Breast epithelium (tissue), 4 donors: ENCODE measurements at regions of chr1 and their contacts with region 1.

Region 1: GRCh38 chr1:109532365-109533136 is 7.1 kb upstream of the GPR61 start:
- DNase-seq: peak; percentile 70 to 79
- H3K4me3 ChIP-seq: peak overlapping the region in 1 of 3 donors; percentile 32
- H3K27ac ChIP-seq: peak overlapping the region in 1 of 2 donors; percentile 43
- H3K4me1 ChIP-seq: no peaks in the 10 kb centered on the region
- H3K27me3 ChIP-seq: no peaks in the 10 kb centered on the region
- CTCF ChIP-seq: peak; percentile 93 to 96 (median 96)
- POLR2A ChIP-seq: no peak

Region 2: DNA sequence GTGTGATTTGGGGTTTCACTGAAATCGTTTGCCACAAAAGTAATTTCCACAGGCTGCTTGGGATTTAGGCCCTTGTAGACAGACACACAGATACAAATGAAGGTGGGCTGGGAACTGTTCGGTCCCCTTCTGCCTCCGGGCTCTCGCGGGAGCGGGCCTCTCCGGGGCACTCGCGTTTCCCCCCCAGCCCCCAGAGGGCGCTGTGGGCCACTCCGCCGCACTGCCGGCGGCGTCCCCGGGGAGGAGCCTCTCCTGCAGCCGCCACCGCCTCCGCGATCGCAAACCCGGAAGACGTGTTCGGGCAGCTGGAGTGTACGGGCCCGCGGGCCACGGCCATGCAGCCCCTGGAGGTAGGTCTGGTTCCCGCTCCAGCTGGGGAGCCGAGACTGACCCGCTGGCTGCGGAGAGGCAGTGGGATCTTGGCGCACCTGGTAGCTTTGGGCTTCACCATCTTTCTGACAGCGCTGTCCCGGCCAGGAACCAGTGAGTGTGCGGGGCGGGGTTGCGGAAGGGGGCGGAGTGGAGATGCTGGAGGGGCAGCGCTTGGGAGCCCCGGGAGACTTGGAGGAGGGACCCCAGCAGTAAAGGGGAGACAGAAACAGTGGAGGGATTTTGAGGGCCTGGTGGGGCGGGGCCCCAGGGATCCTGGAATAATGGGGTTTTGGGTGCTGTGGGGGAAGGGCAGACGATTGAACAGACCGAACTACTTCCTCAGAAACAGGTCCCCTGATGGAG is 38.6 kb before region 1 on chr1 and contains the start of gene CYB561D1:
- intact Hi-C with region 1: loop called (anchors 5 kb)
- DNase-seq: peak; percentile 77 to 85
- H3K4me3 ChIP-seq: peak within 1 kb of the TSS; percentile 85 to 87 (median 86)
- H3K27ac ChIP-seq: peak within 1 kb of the TSS; percentile 60 to 74
- H3K4me1 ChIP-seq: no peaks in the 10 kb centered on the region
- H3K27me3 ChIP-seq: no peaks in the 10 kb centered on the region
- CTCF ChIP-seq: peak; percentile 69 to 91 (median 88)
- POLR2A ChIP-seq: no peak
- total RNA-seq, gene CYB561D1: 6.6 to 9.1 (median 8.2) TPM

Region 3: DNA sequence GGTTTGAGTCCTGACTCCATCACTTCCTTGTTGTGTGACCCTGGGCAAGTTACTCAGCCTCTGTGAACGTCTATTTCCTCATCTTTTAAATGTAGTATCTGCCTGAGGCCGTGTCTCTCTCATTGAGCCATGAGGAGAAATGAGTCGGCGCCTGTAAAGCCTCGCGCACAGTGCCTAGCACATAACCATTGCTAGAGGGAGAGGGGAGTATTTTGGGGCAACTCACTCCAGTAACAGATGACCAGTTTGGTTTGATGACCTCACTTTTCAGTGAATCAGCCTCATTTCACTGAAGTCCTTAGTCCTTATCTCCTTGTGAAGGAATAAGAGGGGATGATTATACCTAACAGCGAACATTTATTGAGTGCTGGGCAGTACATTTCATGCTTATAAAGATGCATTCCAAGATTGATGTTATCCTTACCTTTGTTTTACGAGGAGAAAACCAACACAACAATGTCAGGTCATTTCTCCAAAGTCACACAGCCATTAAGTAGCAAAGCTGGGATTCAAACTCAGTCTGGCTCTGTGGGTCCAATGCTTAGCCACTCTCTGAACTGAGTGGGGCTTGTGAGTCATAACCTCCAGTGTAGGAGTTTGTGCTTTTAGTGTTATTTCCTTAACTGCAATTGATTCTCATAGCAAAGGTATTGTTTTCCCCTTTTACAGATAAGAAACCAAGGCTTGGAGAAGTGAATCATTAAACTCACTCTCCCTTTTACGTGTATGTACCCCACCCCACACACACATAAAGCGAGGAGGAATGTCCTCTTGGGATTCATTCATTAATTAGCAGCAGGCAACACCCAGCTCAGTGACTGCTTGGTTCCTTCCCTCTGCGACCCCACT is 703.5 kb after region 1 on chr1:
- intact Hi-C with region 1: no loop called
- DNase-seq: no peak
- H3K4me3 ChIP-seq: no peak overlapping the region
- H3K27ac ChIP-seq: peak overlapping the region; percentile 64 to 88
- H3K4me1 ChIP-seq: peaks cover 0 to 12% of the 10 kb centered on the region in 2 donors
- H3K27me3 ChIP-seq: no peaks in the 10 kb centered on the region
- CTCF ChIP-seq: no peak
- POLR2A ChIP-seq: no peak

Region 4: DNA sequence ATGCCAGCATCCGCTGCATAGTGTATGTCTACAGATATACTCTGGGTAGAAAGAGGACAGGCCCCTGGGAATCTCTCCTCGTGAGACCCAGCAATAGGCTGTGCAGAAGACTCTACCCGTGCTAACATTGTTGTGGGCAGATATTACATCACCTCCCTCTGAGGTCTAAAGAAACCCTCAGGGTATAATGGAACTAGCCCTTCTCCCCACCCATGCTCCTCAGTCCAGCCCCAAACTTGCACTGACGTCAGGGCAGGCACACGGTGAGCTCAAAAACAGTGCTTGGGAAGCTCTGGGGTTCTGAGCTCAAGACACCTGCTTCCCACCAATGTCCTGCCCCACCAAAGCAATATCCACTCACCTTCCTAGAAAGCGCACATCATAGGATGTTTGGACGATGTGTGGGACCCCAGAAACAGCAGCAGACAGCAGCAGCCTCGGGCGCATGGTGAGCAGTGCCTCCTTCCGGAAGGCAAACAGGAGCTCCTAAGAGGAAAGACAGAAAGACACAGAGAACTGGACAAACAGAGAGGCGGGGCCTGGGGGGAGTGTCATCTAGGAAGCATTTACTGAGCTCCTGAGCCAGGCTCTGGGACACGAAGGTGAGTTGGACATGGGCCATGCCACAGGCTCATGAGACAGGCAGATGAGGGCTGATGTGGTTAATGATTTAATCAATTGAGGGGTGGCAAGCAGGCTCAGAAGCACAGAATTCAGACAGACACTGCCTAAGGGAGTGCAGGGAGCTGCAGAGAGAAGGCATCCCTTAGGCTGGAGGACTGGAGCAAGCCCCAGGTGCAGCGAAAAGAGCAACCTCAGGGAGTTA is 1890.2 kb after region 1 on chr1:
- intact Hi-C with region 1: loop called (anchors 10 kb)
- DNase-seq: peak; percentile 42 to 67
- H3K4me3 ChIP-seq: no peak overlapping the region
- H3K27ac ChIP-seq: peak overlapping the region in 1 of 2 donors; percentile 58
- H3K4me1 ChIP-seq: no peaks in the 10 kb centered on the region
- H3K27me3 ChIP-seq: no peaks in the 10 kb centered on the region
- CTCF ChIP-seq: no peak
- POLR2A ChIP-seq: no peak